Activated naive CD4-positive, alpha-beta T cell treated with anti-CD3 and anti-CD28 coated beads for 36 hours (primary cell): ENCODE measurements at regions of chr14 and their contacts with region 1.

Region 1: GRCh38 chr14:61025251-61026223 is 44.5 kb downstream of the SLC38A6 start:
- DNase-seq: peak; percentile 76
- H3K4me3 Mint-ChIP-seq: no peak overlapping the region
- H3K27ac Mint-ChIP-seq: no peak overlapping the region
- H3K4me1 Mint-ChIP-seq: no peaks in the 10 kb centered on the region
- H3K27me3 Mint-ChIP-seq: no peaks in the 10 kb centered on the region

Region 2: DNA sequence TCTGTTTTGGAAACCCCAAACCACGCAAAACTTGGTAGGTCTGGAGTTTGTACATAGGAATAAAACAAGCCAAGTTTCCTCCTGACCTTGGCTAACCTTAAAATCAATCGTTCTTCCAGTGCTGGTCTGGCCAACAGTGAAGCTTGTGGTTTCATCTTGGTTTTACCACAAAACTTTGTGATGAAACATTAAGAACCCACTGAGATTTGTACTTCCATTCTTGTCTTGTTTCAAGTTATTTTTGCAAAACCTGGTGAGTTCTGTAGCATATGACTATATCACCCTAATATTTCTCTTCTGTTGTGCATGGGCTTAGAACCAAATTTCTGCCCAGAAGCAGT is 402.6 kb before region 1 on chr14:
- CTCF ChIA-PET with region 1: interaction called, 21 read pairs
- intact Hi-C with region 1: loop called (anchors 1 kb)
- DNase-seq: no peak
- H3K4me3 Mint-ChIP-seq: no peak overlapping the region
- H3K27ac Mint-ChIP-seq: no peak overlapping the region
- H3K4me1 Mint-ChIP-seq: no peaks in the 10 kb centered on the region
- H3K27me3 Mint-ChIP-seq: peaks cover 13% of the 10 kb centered on the region

Region 3: DNA sequence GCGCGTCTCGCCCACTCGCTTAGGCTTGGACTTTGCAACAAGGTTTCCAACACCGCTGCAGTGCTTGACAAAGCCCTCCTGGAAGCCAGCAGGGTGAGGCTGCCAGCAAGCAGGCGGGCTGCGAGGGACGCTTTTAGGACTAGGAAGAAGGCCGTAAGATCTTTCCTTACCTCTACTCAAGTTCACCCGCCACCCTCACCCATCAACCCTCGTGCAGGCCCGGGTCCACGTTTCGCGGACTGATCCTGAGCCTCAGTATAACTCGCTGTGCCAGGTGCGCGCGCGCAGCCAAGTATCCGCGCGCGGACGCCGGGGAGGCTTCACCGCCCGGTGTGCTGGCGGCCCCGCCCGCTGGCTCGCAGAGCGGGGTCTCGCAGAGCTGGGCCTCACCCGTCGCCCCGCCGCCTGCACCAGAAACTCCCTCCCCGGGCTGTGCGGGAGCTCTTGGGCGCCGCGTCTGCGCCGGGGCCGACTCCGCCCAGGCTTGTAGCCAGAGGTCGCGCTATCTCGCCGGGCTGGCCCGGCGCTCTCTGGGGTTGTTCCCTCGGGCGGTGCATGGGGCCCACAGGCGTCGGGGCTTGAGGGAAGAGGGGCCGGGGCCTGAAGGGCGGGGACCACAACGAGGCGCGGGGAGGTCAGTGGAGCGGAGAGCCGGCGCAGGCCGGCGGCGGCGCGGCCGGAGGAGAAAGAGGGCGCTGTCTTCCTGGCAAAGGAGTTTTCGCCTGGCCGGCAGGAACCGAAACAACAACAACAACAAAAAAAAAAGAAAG is 368.7 kb before region 1 on chr14:
- CTCF ChIA-PET with region 1: interaction called, 3 read pairs
- intact Hi-C with region 1: loop called (anchors 1 kb)
- DNase-seq: peak; percentile 39
- H3K4me3 Mint-ChIP-seq: peak overlapping the region; percentile 75
- H3K27ac Mint-ChIP-seq: no peak overlapping the region
- H3K4me1 Mint-ChIP-seq: peaks cover 39% of the 10 kb centered on the region
- H3K27me3 Mint-ChIP-seq: peaks cover 79% of the 10 kb centered on the region

Region 4: GRCh38 chr14:61188978-61189808 is 163.7 kb after region 1 on chr14:
- CTCF ChIA-PET with region 1: no interaction called
- intact Hi-C with region 1: loop called (anchors 2 kb)
- DNase-seq: peak; percentile 76
- H3K4me3 Mint-ChIP-seq: peak overlapping the region; percentile 70
- H3K27ac Mint-ChIP-seq: peak overlapping the region; percentile 53
- H3K4me1 Mint-ChIP-seq: peaks cover 15% of the 10 kb centered on the region
- H3K27me3 Mint-ChIP-seq: peaks cover 36% of the 10 kb centered on the region